ENCODE measurements at regions of chr12 and their contacts with region 1.

Region 1: DNA sequence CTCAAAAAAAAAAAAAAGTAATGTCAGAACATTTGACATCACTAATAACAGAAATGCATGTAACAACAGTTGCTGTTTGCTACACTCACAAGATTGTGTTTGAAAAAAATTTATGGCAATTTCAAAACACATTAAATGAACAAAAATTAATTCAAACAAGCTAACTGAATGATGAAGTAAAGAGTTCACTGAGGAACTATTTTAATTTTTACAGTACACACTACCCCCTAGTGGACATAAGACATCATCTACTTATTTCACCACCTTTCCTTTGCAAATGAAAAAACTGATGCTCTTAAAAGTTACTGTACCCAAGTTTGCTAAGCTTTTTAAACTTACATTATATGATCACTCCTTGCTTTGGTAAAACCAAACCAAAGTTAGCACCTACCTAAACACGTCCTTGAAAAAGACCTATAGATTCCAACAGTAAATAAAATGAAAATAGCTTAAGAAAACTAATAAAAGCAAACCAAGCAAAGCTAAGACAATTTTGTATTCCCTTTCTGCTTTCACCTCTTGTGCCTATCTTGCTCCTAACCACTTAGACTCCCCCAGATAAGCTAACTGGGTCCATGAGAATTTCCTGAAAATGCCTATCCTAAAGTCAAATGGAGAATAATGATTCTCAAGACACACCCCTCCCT is 22.2 kb downstream of the UBE2N start:
- DNase-seq: peak in 1 of 35 experiments; percentile 70
- ATAC-seq: peak; percentile 57 to 73 (median 66)
- H3K4me3 ChIP-seq: no peak overlapping the region
- H3K4me3 Mint-ChIP-seq: no peak overlapping the region
- H3K27ac ChIP-seq: no peak overlapping the region
- H3K27ac Mint-ChIP-seq: peak overlapping the region; percentile 71 to 78
- H3K4me1 ChIP-seq: peaks cover 15 to 43% of the 10 kb centered on the region in 2 experiments
- H3K4me1 Mint-ChIP-seq: peaks cover 86 to 90% (median 87%) of the 10 kb centered on the region in 3 donors
- H3K27me3 ChIP-seq: no peaks in the 10 kb centered on the region
- H3K27me3 Mint-ChIP-seq: no peaks in the 10 kb centered on the region

Region 2: DNA sequence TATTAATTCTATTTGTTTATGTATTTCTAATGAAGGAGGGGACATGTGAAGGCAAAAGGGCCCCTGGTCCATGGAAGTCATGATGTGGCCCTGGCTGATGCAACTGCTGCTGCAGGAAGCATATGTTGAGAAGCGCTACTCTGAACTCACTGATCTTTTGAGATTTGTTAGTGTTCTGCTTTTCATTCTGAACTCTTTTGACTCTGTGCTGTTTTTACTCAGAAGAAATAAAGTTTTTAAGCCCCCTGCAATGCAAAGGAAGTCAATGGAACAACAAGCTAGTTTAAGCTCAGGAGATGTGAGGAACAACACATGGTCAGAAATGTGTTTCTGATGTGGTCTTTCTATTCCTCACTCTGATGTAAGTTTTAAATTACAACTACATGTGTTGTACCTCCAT is 1185.0 kb before region 1 on chr12:
- CTCF ChIA-PET with region 1: no interaction called
- POLR2A ChIA-PET with region 1: no interaction called
- DNase-seq: peak in 2 of 35 experiments; percentile 4 to 19
- ATAC-seq: peak; percentile 54 to 83 (median 66)
- H3K4me3 ChIP-seq: no peak overlapping the region
- H3K4me3 Mint-ChIP-seq: peak overlapping the region in 1 of 3 donors; percentile 42
- H3K27ac ChIP-seq: no peak overlapping the region
- H3K27ac Mint-ChIP-seq: peak overlapping the region; percentile 77 to 82
- H3K4me1 ChIP-seq: peaks cover 2 to 20% of the 10 kb centered on the region in 2 experiments
- H3K4me1 Mint-ChIP-seq: peaks cover 24 to 33% (median 32%) of the 10 kb centered on the region in 3 donors
- H3K27me3 ChIP-seq: no peaks in the 10 kb centered on the region
- H3K27me3 Mint-ChIP-seq: no peaks in the 10 kb centered on the region

Region 3: DNA sequence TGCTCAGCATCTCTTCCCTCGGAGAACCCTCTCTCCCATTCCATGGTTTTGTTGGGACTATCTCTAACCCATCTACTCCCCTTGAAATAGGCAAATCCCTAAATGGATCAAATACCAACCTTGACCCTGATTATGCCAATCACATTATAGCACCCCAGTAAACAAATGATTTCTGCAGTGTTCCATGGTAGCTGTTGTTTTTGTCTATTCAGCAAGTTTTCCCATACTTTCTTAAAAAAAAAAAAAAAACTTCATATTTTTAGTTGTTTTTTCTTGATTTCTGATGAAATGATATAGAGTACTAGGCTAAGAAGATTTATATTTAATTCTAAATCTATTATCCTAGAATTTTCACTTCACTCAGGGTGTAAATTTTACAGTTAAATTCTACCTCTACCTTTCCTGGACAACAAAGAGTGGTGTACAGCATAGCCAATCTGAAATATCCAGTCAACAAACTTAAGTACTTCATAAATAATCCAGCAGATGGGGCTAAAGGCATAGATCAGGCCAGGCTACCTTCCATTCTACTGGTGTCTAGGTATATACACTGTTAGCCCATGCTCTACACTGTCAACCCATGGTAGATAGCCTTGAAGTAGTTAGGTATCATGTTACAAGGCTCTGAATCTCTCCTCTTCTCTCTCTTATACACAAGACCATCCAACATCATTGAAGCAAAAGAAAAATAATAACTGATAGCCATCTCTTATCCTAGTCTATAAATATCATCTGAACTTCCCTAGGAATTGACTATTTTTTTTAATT is 634.5 kb before region 1 on chr12:
- CTCF ChIA-PET with region 1: interaction called, 14 to 23 read pairs
- POLR2A ChIA-PET with region 1: no interaction called
- DNase-seq: peak in 22 of 35 experiments; percentile 1 to 78 (median 14)
- ATAC-seq: peak; percentile 96 to 99 (median 98)
- H3K4me3 ChIP-seq: no peak overlapping the region
- H3K4me3 Mint-ChIP-seq: no peak overlapping the region
- H3K27ac ChIP-seq: no peak overlapping the region
- H3K27ac Mint-ChIP-seq: no peak overlapping the region
- H3K4me1 ChIP-seq: peaks cover 0 to 3% of the 10 kb centered on the region in 2 experiments
- H3K4me1 Mint-ChIP-seq: peaks cover 12 to 16% (median 14%) of the 10 kb centered on the region in 3 donors
- H3K27me3 ChIP-seq: no peaks in the 10 kb centered on the region
- H3K27me3 Mint-ChIP-seq: no peaks in the 10 kb centered on the region

Region 4: GRCh38 chr12:92987362-92987761 is 432.1 kb before region 1 on chr12:
- CTCF ChIA-PET with region 1: interaction called, 22 to 24 read pairs
- POLR2A ChIA-PET with region 1: no interaction called
- DNase-seq: peak in 3 of 35 experiments; percentile 15 to 70 (median 24)
- ATAC-seq: peak; percentile 56 to 78 (median 67)
- H3K4me3 ChIP-seq: no peak overlapping the region
- H3K4me3 Mint-ChIP-seq: peak overlapping the region in 1 of 3 donors; percentile 49
- H3K27ac ChIP-seq: no peak overlapping the region
- H3K27ac Mint-ChIP-seq: peak overlapping the region in 1 of 2 donors; percentile 25
- H3K4me1 ChIP-seq: peaks cover 6 to 9% of the 10 kb centered on the region in 2 experiments
- H3K4me1 Mint-ChIP-seq: peaks cover 10 to 13% (median 10%) of the 10 kb centered on the region in 3 donors
- H3K27me3 ChIP-seq: no peaks in the 10 kb centered on the region
- H3K27me3 Mint-ChIP-seq: no peaks in the 10 kb centered on the region

Region 5: DNA sequence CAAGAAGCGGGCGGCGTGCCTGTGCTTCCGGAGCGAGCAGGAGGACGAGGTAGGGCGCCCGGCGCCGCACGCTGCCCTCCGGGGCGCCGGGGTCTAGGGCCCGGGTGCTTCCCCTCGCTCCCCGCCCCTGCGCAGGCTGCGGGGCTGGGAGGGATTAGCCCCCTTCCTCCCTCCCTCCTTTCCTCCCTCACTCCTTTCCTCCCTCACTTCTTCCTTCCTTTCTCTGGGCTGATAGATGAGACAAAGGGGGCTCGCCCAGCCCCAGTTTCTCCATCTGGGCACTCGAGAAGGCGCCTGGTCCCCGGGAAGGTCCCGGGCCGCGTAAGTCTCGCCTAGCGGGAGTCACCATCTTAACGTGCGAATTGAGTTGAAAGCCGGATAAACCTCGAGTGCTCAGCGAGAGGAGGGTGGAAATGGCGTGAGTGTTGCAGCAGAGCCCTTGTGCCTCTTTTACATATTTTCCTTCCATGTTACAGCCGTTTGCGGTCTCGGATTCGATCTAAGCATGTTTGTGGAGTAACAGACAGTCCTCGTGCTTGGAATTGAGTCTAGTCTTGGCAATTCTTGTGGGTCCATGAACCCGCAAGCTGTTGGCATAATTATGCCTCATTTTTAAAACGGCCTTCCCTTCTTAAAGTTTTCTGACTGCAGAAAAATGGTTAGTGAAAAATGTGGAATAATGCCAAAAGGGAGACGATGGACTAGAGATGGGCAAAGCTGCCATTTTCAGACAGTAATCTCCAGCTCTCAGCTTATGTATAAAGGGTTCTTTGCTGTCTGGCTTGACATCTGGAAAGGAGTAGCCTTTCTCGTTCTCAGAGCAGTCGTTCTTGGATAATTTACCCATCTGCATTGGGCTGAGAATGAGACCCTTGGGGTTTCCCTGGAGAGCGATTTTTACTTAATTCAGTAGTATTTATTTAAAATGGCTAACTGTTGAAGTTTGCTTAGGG is 40.9 kb before region 1 on chr12:
- CTCF ChIA-PET with region 1: interaction called, 5 to 17 read pairs
- POLR2A ChIA-PET with region 1: no interaction called
- DNase-seq: peak; percentile 20 to 81 (median 49)
- ATAC-seq: peak; percentile 59 to 66 (median 64)
- H3K4me3 ChIP-seq: peak overlapping the region; percentile 61 to 84
- H3K4me3 Mint-ChIP-seq: peak overlapping the region; percentile 100
- H3K27ac ChIP-seq: peak overlapping the region; percentile 80
- H3K27ac Mint-ChIP-seq: peak overlapping the region; percentile 99 to 100
- H3K4me1 ChIP-seq: peaks cover 18 to 22% of the 10 kb centered on the region in 2 experiments
- H3K4me1 Mint-ChIP-seq: peaks cover 43 to 55% (median 44%) of the 10 kb centered on the region in 3 donors
- H3K27me3 ChIP-seq: no peaks in the 10 kb centered on the region
- H3K27me3 Mint-ChIP-seq: no peaks in the 10 kb centered on the region

Region 6: GRCh38 chr12:93403988-93404803 is 15.3 kb before region 1 on chr12:
- CTCF ChIA-PET with region 1: interaction called, 3 to 12 read pairs
- POLR2A ChIA-PET with region 1: no interaction called
- DNase-seq: no peak
- ATAC-seq: no peak
- H3K4me3 ChIP-seq: no peak overlapping the region
- H3K4me3 Mint-ChIP-seq: no peak overlapping the region
- H3K27ac ChIP-seq: no peak overlapping the region
- H3K27ac Mint-ChIP-seq: peak overlapping the region in 1 of 2 donors; percentile 4
- H3K4me1 ChIP-seq: no peaks in the 10 kb centered on the region
- H3K4me1 Mint-ChIP-seq: peaks cover 6 to 20% (median 7%) of the 10 kb centered on the region in 3 donors
- H3K27me3 ChIP-seq: no peaks in the 10 kb centered on the region
- H3K27me3 Mint-ChIP-seq: no peaks in the 10 kb centered on the region

Region 7: GRCh38 chr12:93441617-93442410 is 22.3 kb after region 1 on chr12 and contains the start of gene UBE2N:
- CTCF ChIA-PET with region 1: interaction called, 7 to 53 read pairs
- POLR2A ChIA-PET with region 1: interaction called, 3 to 6 read pairs
- DNase-seq: peak; percentile 91 to 98 (median 96)
- ATAC-seq: peak; percentile 85 to 87 (median 86)
- H3K4me3 ChIP-seq: peak within 1 kb of the TSS; percentile 68 to 92
- H3K4me3 Mint-ChIP-seq: peak within 1 kb of the TSS; percentile 93 to 96 (median 95)
- H3K27ac ChIP-seq: peak within 1 kb of the TSS; percentile 94
- H3K27ac Mint-ChIP-seq: peak within 1 kb of the TSS; percentile 97 to 98
- H3K4me1 ChIP-seq: peaks cover 31 to 34% of the 10 kb centered on the region in 2 experiments
- H3K4me1 Mint-ChIP-seq: peaks cover 49 to 54% (median 51%) of the 10 kb centered on the region in 3 donors
- H3K27me3 ChIP-seq: no peaks in the 10 kb centered on the region
- H3K27me3 Mint-ChIP-seq: no peaks in the 10 kb centered on the region
- total RNA-seq, gene UBE2N: 66.3 to 81.7 (median 79.2) TPM

Measured in T-cell (primary cell).